PC-9 (cell line): ENCODE measurements at regions of chr6 and their contacts with region 1.

Region 1: DNA sequence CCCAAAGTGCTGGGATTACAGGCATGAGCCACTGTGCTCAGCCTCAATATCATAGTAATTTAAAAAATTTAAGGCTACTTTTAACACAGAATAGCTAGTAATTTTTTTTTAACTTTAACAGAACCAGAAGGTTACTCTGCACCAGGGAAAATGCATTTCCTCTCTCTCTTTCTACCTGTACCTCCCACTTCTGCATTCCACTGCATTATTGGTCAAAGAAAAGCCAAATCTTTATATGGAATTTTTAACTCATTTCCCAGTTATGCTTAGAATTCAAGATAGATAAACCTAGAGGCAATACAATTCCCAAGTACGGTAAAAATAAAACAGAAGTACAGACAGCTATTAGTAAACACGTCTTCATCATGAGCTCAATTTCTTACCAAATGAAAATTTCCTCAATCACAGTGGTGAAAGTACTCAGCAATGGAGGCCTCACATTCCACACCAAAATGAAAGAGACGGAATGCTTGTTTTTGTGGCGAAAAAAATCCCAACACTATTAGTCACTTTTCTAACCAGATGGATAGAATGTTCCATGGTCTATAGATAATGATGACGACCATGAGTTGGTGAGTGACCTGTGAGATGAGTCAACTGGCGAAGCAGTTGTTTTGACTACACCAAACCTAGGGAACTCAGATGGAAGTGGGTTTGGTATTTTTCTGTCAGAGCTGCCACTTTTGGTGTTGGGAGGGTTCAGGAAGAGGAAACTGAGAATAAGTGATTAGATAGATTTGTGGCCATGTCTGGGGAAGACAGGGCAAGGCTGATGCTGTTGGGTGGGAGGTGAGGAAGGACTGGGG is 104.7 kb upstream of the SGK1 start:
- DNase-seq: peak; percentile 31 to 78
- H3K4me3 ChIP-seq: no peak overlapping the region
- H3K27ac ChIP-seq: peak overlapping the region; percentile 53
- H3K4me1 ChIP-seq: peaks cover 55% of the 10 kb centered on the region
- H3K27me3 ChIP-seq: no peaks in the 10 kb centered on the region
- CTCF ChIP-seq: no peak

Region 2: DNA sequence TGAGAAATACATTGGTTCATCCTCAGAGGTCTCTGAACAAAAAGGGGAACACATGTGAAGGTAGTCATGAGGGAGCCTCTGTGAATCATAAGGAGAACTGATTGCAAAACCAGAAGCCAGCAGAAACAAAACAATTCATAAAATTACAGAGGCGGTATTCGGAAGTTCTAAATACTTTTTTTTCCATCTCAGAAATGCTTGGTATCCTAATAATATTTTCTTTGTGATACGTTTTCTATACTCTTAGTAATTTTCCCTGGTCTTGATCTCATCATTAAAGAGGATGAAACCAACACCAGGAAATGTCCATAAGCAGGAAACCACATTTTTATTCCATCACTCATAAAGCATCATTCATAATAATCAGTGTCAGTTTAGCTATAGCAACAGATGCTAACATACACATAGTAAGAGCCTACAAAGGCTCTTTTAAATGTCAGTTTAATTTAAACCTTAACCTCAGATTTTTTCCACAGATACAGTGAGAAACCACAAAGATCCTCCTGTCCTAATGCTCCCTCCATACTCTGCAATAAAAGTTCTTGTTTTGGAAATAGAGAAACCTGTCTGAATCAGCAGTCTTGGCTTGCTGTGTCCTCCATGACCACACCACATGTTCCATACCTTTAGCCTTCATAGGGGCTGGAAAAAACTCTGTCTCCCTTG is 134.0 kb before region 1 on chr6:
- CTCF ChIA-PET with region 1: no interaction called
- POLR2A ChIA-PET with region 1: no interaction called
- intact Hi-C with region 1: loop called (anchors 2 kb)
- DNase-seq: peak in 1 of 2 experiments; percentile 99
- H3K4me3 ChIP-seq: no peak overlapping the region
- H3K27ac ChIP-seq: peak overlapping the region; percentile 87
- H3K4me1 ChIP-seq: peaks cover 29% of the 10 kb centered on the region
- H3K27me3 ChIP-seq: no peaks in the 10 kb centered on the region
- CTCF ChIP-seq: no peak

Region 3: DNA sequence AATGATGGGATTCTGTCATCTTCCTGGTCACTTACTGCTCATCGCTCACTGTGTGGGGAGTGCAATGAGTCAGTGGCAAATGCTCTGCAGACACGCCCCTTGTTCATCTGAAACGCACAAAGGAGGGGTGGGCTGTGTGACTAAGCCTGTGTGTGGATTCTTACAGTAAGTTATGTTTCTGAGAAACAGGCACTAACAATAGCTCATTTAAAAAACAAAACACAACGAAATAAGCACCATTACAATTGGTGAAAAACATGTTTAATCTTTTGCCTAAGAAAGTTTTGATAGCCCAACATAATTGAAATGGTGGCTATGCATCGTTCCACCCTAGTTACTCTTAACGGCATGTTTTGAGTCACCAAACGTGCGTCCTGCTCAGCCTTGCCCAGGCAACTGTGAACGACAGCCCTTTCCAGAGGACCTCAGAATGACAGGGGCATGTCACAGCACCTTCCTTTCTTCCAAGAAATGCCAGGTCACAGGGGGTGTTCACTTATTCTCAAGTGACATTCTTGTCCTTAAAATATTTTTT is 13.7 kb after region 1 on chr6:
- CTCF ChIA-PET with region 1: no interaction called
- POLR2A ChIA-PET with region 1: no interaction called
- intact Hi-C with region 1: no loop called
- DNase-seq: peak; percentile 75 to 96
- H3K4me3 ChIP-seq: peak overlapping the region; percentile 36; the same call in 1 of the 2 replicates
- H3K27ac ChIP-seq: peak overlapping the region; percentile 85
- H3K4me1 ChIP-seq: peaks cover 29% of the 10 kb centered on the region
- H3K27me3 ChIP-seq: no peaks in the 10 kb centered on the region
- CTCF ChIP-seq: no peak

Region 4: GRCh38 chr6:134686071-134686470 is 263.4 kb after region 1 on chr6:
- CTCF ChIA-PET with region 1: no interaction called
- POLR2A ChIA-PET with region 1: interaction called, 21 read pairs
- intact Hi-C with region 1: no loop called
- DNase-seq: no peak
- H3K4me3 ChIP-seq: no peak overlapping the region
- H3K27ac ChIP-seq: no peak overlapping the region
- H3K4me1 ChIP-seq: peaks cover 6% of the 10 kb centered on the region
- H3K27me3 ChIP-seq: no peaks in the 10 kb centered on the region
- CTCF ChIP-seq: no peak

Region 5: DNA sequence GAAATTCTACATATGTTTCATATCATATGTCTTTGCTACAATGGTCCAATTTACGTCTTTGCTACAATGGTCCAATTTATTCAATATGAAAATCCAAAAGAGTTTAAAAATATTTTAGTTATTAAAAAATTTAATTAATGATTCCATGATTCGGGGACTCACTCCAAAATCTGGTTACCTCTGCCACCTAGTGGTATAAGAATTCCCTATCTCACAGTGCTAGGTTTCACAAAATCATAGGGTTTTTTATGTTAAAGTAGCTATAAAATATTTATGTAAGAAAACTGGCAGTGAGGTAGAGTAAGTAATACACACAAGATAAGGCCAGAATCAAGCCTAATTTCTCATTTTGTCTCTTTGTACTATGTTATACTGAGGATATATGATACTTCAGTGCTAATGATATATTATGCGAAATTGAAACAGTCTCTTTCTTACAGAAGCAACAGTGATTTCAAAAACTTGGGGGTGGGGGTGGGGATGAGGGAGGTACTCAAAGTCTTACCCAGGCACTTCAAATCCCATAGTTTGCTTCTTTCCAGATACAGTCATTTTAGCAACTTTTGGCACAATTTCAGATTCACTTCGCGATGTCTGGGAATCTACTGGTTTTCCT is 579.7 kb after region 1 on chr6:
- CTCF ChIA-PET with region 1: no interaction called
- POLR2A ChIA-PET with region 1: interaction called, 14 read pairs
- intact Hi-C with region 1: no loop called
- DNase-seq: no peak
- H3K4me3 ChIP-seq: no peak overlapping the region
- H3K27ac ChIP-seq: no peak overlapping the region
- H3K4me1 ChIP-seq: no peaks in the 10 kb centered on the region
- H3K27me3 ChIP-seq: no peaks in the 10 kb centered on the region
- CTCF ChIP-seq: peak; percentile 88